ENCODE measurements at regions of chr13 and their contacts with region 1.

Region 1: GRCh38 chr13:99436686-99437416 is 64.4 kb upstream of the TM9SF2 start:
- DNase-seq: peak; percentile 26
- H3K4me3 ChIP-seq: peak overlapping the region; percentile 36
- CTCF ChIP-seq: peak; percentile 99

Region 2: DNA sequence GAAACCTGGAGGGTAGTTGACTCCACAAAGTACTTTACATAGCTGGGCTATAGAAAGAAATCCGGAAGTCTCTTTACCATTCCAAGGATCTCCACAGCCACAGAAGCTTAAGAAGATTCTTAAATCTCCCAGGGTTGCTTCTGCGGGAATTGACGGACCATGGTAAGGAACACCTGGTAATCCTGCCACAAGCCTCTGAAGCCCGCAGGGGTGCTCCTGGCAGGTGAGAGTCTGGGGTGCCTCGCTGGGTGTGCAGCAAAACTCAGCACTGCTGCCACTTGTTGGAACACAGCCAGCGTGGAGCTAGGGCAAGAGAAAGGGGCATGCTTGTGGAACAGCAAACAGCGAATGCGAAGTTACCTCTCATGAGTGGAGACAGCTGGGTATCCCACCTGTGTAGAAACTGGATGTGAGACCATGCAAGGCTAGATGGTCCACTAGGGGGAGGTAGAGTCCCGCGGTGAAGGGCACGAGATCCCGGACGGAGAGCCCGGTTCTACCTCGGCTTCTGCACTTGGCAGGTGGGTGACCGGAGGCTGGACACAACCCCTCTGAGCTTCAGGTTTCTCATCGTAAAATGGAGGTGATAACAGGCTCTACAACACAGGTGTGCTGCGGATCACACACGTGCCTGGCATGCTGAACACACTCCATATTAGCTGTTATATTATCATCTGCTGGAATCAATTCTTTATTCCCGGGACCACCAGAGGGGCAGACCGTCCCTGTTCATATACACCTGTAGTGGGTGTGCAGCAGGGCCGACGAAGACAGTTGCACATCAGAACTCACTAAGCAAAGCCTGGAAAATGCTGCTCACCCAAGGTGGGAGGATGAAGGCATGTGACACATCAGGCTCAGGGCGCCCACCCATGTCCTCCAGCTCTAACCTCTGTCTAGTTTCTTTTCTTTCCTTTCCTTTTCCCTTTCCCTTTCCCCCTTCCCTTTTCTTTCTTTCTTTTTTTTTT is 260.3 kb before region 1 on chr13:
- CTCF ChIA-PET with region 1: interaction called, 120 read pairs
- POLR2A ChIA-PET with region 1: no interaction called
- DNase-seq: no peak
- H3K4me3 ChIP-seq: no peak overlapping the region
- CTCF ChIP-seq: peak; percentile 88

Region 3: DNA sequence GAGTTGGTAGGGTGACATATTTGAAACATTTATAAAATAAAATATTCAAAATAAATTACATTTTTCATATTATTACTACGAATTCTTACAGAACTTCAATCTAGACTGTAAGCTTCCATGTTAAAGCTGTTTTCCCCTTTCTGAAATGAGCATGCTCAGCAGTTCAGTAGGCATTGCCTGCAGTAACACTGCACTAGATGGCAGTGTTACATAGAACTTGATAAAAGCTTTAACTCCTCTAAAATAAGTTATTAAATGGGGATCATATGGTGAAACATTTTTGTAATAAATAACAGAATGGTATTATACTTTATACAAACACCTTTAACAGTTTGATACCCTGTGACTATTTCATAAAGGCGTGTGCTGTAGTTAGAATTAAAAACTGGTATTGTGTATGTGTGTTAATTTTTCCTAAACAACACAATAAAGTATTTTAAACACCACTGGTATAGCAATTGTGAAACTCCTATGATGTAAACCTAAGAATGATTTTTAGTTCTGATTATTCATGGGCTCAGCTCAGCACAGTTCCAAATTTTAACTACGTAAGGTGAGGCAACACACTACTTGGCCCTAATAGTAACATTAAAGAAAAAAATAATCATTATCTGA is 167.1 kb before region 1 on chr13:
- CTCF ChIA-PET with region 1: interaction called, 1,002 read pairs
- POLR2A ChIA-PET with region 1: no interaction called
- DNase-seq: no peak
- H3K4me3 ChIP-seq: no peak overlapping the region
- CTCF ChIP-seq: peak; percentile 69

Region 4: DNA sequence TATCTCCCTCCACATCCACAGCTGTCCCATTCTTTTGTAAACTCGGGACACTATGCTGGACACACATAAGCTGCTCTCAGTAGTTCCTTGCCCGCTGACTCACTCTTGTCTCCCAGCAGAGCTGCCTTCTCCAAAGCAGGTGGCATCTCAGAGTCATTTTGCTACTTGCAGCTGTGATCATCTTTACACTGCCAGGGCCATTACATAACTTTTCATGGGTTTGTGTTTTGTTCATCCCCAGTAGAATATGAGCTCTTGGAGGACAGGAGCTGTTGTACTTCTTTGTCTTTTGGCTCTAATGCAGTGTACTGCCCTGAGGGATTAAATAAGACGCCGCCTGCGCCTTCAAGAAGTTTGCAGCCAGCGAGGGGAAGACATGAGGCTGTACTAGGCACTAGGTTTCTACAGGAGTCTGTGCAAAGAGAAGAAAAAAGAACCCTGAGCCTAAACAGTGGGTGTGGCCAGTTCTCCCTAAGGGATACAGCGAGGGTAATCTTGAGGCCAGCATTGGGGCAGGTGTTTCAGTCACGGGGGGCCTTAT is 88.9 kb before region 1 on chr13:
- CTCF ChIA-PET with region 1: interaction called, 11 read pairs
- POLR2A ChIA-PET with region 1: no interaction called
- DNase-seq: no peak
- H3K4me3 ChIP-seq: no peak overlapping the region
- CTCF ChIP-seq: no peak

Region 5: DNA sequence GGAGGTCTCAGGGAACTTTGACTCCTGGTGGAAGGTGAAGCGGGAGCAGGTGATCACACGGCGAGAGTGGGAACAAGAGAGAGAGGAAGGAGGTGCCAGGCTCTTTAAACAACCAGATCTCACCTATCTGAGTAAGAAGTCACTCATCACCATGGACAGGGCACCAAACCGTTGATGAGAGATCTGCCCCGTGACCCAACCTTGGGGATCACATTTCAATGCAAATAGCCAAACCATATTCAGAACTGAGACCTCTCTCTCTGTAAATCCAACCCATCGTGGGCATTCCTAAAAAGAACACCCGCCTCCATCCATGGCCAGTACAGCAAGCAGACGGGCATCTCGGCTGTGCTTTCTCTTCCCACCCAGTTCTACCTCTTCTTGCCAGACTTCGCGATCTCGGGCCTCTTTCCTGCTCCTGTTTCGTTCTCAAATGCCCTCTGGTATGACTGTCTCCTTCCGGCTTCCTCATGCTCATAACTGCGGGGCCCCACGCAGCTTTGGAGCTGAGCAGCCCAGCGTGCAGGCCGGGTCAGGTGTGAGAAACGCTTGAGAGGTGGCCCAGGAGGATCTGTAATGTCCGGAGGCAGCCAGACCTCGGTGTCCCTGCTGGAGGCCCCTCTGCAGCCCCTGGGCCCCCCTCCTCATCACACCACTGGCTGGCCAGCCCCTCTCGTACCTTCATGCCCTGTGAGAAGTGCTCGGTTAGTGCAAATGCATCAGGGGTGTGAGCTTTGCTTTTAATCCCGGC is 32.7 kb before region 1 on chr13:
- CTCF ChIA-PET with region 1: interaction called, 14 read pairs
- POLR2A ChIA-PET with region 1: no interaction called
- DNase-seq: no peak
- H3K4me3 ChIP-seq: no peak overlapping the region
- CTCF ChIP-seq: no peak

Region 6: DNA sequence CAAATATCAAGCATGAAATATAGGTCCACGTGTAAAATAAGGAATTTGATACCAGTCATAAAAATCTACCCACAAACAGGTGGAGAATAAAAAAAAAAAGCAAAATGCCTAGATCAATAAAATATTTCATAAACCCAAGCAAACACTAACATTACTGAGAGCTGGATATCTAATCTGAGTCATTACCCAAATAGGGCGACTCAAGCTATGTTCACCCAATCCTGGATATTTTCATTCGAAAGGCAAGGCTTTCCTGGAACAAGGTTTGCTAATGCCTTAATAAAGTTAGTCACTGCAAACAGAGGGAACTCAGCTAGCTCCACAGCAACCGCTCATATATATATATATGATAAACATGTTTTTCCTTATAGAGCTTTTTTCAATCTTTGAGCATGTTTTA is 30.9 kb after region 1 on chr13:
- CTCF ChIA-PET with region 1: interaction called, 18 read pairs
- POLR2A ChIA-PET with region 1: no interaction called
- DNase-seq: no peak
- H3K4me3 ChIP-seq: no peak overlapping the region
- CTCF ChIP-seq: no peak

Region 7: DNA sequence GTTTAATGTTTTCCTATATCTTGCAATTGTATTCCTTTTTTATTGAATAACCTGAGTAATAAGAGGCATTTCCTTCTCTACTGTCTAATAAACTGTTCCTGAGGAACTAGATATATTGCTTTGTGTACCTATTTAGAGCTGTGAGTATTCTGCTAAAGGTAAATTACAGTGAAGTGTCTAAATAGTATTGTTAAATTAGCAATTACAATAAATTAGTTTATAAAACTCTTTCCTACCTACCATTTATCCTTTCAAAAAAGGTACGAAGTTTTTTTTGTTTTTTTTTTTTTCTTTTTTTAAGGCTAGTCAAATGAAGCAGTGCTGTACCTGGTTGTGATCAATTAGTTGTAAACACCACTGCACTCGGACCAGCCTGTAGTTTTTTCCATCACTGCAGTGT is 99.2 kb after region 1 on chr13:
- CTCF ChIA-PET with region 1: interaction called, 13 read pairs
- POLR2A ChIA-PET with region 1: no interaction called
- DNase-seq: no peak
- H3K4me3 ChIP-seq: no peak overlapping the region
- CTCF ChIP-seq: no peak

Measured in AG04449 (cell line).